Heart right ventricle (tissue), 16 donors: ENCODE measurements at regions of chr15 and their contacts with region 1.

Region 1: DNA sequence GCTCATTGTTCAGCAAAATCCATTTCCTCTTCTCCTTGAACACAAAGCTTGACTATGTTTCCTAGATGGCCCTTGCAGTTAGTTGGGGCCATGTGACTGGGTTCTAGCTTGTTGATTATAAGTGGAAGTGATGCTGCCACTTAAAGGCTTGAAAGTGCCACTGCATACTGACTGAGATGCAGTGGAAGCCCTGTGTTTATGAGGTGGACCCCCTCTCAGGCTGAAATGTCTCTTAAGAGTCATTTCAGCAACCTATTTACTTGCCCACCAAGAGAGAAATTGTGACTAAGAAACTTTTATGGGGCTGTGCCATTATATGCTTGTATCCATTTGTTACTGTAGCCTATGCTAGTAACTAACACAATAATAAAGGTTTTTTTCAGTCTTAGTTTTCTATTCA is 8.4 kb upstream of the ANP32A start:
- DNase-seq: no peak
- ATAC-seq: peak in 7 of 8 donors; percentile 49 to 83 (median 73)
- H3K4me3 ChIP-seq: no peak overlapping the region
- H3K27ac ChIP-seq: no peak overlapping the region
- H3K4me1 ChIP-seq: peaks cover 0 to 12% (median 0%) of the 10 kb centered on the region in 9 donors
- H3K27me3 ChIP-seq: no peaks in the 10 kb centered on the region
- CTCF ChIP-seq: peak in 8 of 9 donors; percentile 15 to 72 (median 61)

Region 2: DNA sequence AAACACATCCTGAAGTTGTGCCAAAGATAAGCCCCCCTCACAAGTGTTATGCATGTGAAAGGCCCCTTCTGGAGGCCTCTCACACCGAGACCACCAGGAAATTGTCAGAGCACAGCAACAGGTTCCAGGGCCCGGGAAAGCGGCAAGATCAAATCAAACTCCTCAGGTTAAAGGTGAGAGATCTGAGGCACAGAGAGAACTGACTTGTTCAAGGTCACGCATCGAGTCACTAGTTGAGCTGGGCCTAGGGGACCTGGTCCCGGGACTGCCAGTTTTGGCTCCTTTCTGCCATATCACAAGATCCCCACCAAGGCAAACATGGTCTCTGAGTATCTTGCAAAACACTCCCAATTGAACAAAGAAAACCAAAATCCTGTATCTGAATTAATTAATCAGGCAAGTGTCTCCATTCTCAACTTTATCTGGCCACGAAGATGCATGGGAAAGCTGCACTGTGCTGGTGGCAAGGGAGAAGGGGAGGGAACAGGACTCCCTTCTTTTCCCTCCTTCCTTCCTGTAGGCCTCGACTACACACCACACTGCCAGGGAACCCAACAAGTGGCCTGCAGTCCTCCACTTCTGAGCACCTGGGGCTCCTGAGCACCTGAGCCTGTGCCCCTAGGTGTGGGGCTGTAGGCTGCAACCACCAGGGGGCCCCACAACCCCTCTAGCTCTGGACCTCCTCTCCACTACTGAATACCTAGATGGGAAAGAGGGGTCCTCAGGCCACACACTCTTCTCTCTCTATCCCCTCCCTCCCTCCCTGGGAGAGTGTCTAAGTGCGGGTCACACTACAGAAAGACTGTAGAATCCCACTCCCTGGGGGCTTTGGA is 45.6 kb before region 1 on chr15:
- intact Hi-C with region 1: loop called in 4 of 10 experiments (anchors 5 kb)
- DNase-seq: peak in 1 of 2 donors; percentile 41
- ATAC-seq: peak in 6 of 8 donors; percentile 38 to 51 (median 44)
- H3K4me3 ChIP-seq: no peak overlapping the region
- H3K27ac ChIP-seq: peak overlapping the region in 5 of 10 donors; percentile 3 to 90 (median 74)
- H3K4me1 ChIP-seq: peaks cover 10 to 41% (median 33%) of the 10 kb centered on the region in 9 donors
- H3K27me3 ChIP-seq: no peaks in the 10 kb centered on the region
- CTCF ChIP-seq: peak; percentile 37 to 77 (median 66)

Region 3: DNA sequence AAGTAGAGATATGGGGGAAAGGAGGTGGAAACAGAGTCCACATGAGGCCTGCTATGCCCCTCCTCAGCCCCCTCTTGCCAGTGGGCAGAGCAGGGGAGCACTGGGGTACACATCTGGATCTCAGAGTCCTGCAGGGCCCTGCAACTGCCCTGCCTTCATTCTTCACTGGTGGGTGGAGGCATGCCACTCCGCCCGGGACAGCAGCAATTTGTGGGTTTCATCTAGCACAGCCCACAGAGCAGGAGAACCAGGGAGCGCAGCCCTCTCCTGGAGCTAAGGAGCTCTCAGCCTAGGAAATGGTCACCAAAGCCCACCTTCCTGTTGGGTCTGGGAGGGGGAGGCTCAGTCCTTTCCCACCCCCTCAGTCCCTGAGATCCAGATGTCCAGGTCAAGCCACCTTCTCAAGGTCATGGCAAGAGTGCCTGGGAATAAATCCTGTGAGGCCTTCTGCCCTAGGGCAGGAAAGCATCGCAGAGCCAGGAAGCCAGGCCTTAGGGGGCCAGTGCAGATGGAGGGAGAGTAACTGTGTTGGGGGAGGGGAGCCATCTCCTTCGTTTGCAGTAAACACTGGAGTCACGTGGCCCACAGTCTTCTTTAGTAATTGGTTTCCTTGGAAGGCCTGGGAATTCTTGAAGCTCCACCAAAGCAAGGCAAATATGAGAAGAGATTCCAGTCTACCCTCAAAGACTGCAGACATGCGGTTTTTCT is 39.4 kb before region 1 on chr15:
- intact Hi-C with region 1: loop called in 4 of 10 experiments (anchors 5 kb)
- DNase-seq: peak; percentile 18 to 48
- ATAC-seq: peak in 7 of 8 donors; percentile 14 to 31 (median 25)
- H3K4me3 ChIP-seq: no peak overlapping the region
- H3K27ac ChIP-seq: peak overlapping the region in 9 of 10 donors; percentile 17 to 91 (median 61)
- H3K4me1 ChIP-seq: peaks cover 50 to 81% (median 70%) of the 10 kb centered on the region in 9 donors
- H3K27me3 ChIP-seq: no peaks in the 10 kb centered on the region
- CTCF ChIP-seq: no peak